PC-3 (cell line): ENCODE measurements at regions of chr5 and their contacts with region 1.

Region 1: GRCh38 chr5:34957857-34958690 is 28.7 kb downstream of the DNAJC21 start:
- DNase-seq: peak; percentile 56
- ATAC-seq: peak; percentile 74
- H3K4me3 ChIP-seq: no peak overlapping the region
- H3K27ac ChIP-seq: no peak overlapping the region
- H3K4me1 ChIP-seq: peaks cover 13% of the 10 kb centered on the region
- H3K27me3 ChIP-seq: no peaks in the 10 kb centered on the region
- CTCF ChIP-seq: peak; percentile 77

Region 2: GRCh38 chr5:34929720-34930461 is 28.2 kb before region 1 on chr5:
- CTCF ChIA-PET with region 1: no interaction called
- POLR2A ChIA-PET with region 1: interaction called, 4 read pairs
- intact Hi-C with region 1: loop called (anchors 2 kb)
- DNase-seq: peak; percentile 80
- ATAC-seq: peak; percentile 66
- H3K4me3 ChIP-seq: peak overlapping the region; percentile 91
- H3K27ac ChIP-seq: peak overlapping the region; percentile 48
- H3K4me1 ChIP-seq: peaks cover 14% of the 10 kb centered on the region
- H3K27me3 ChIP-seq: no peaks in the 10 kb centered on the region
- CTCF ChIP-seq: no peak